Breast epithelium (tissue), 4 donors: ENCODE measurements at regions of chr22 and their contacts with region 1.

Region 1: DNA sequence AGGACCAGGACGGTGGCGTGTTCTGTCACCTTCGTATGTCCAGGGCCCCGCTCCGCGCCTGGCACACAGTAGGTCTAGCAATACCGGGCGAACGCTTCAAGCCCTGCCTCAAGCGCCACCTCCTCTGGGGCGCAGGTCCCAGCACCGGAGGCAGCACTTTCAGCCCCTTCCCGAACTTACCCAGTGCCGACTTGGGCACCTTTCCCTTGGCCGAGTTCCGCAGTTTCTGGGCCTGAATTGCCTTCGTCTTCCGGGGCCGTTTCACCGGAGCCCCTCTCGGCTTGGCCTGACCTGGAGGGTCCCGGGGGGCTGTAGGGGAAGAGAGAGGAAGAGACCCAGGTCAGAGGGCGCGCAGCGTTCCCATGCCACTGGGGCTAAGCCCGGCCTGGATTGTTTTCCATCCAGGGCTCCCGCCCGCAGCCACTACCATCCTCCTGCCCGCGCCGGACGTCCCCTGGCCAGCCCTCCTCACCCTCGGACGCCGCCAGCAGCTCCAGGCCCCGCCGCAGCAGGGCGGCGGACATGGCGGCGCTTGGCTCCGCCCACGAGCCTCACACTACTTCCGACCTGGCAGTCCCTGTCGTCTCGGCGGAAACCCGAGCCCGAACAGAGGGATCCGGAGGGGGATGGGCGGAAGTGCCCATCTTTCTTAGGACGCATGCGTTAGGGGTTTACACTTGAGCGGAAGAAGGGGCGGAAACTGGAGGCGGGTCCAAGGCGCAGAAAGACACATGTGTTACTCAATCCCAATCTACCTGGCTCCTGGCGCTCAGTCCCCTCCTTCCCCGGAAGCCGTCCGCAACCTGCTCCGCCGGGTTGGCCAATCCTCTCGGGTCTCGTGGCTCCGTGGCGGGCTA is at the start of gene RPS19BP1:
- DNase-seq: peak; percentile 99 to 100
- H3K4me3 ChIP-seq: peak within 1 kb of the TSS; percentile 83 to 90 (median 88)
- H3K27ac ChIP-seq: peak within 1 kb of the TSS; percentile 92 to 95
- H3K4me1 ChIP-seq: peaks cover 25 to 26% of the 10 kb centered on the region in 2 donors
- H3K27me3 ChIP-seq: no peaks in the 10 kb centered on the region
- CTCF ChIP-seq: no peak
- POLR2A ChIP-seq: peak; percentile 82
- total RNA-seq, gene RPS19BP1: 112 to 177 (median 159) TPM

Region 2: GRCh38 chr22:39144101-39144767 is 388.2 kb before region 1 on chr22:
- intact Hi-C with region 1: no loop called
- DNase-seq: peak in 1 of 2 donors; percentile 41
- H3K4me3 ChIP-seq: peak overlapping the region; percentile 90 to 96 (median 90)
- H3K27ac ChIP-seq: peak overlapping the region; percentile 97 to 98
- H3K4me1 ChIP-seq: peaks cover 10% of the 10 kb centered on the region in 2 donors
- H3K27me3 ChIP-seq: no peaks in the 10 kb centered on the region
- CTCF ChIP-seq: no peak
- POLR2A ChIP-seq: no peak

Region 3: DNA sequence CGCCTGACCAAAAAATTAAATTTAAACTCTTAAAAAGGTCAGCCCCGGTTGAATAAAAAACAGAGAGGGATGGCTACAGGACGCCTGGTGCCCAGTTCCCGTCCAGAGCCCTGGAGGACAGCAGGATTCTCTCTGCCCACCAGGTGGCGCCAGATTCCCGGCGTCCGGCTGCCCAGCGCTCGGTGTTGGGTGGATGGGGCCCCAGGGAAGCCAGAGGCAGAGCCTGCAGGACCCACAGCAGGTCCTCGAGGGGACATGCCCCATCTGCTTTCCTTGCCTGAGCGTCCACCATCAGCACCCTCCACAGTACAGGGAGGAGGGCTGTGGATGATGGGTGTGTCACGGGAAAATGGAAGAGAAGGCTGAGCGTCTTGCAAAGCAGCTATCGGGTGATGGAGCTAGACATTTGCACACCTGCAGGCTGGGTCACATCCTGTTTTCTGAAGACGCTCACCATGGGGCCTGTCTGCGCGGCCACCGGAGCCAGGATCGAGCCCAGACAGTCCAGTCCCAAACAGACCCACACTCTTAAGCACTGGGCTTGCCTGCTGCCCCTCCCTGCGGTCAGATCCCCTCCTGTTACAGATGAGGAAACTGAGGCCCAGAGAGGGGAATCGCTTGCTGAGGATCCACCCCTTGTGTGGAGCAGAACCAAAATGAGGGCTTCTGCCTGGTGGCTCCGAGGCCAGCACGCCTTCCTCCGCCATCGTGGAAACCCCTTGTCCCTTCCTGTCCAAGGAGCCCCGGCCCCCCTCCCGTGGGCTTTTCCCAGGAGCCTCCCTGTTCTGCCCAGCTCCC is 361.4 kb before region 1 on chr22:
- intact Hi-C with region 1: loop called (anchors 5 kb)
- DNase-seq: peak; percentile 64 to 84
- H3K4me3 ChIP-seq: peak overlapping the region in 1 of 3 donors; percentile 41
- H3K27ac ChIP-seq: no peak overlapping the region
- H3K4me1 ChIP-seq: peaks cover 21 to 25% of the 10 kb centered on the region in 2 donors
- H3K27me3 ChIP-seq: no peaks in the 10 kb centered on the region
- CTCF ChIP-seq: peak; percentile 96 to 98 (median 97)
- POLR2A ChIP-seq: no peak

Region 4: DNA sequence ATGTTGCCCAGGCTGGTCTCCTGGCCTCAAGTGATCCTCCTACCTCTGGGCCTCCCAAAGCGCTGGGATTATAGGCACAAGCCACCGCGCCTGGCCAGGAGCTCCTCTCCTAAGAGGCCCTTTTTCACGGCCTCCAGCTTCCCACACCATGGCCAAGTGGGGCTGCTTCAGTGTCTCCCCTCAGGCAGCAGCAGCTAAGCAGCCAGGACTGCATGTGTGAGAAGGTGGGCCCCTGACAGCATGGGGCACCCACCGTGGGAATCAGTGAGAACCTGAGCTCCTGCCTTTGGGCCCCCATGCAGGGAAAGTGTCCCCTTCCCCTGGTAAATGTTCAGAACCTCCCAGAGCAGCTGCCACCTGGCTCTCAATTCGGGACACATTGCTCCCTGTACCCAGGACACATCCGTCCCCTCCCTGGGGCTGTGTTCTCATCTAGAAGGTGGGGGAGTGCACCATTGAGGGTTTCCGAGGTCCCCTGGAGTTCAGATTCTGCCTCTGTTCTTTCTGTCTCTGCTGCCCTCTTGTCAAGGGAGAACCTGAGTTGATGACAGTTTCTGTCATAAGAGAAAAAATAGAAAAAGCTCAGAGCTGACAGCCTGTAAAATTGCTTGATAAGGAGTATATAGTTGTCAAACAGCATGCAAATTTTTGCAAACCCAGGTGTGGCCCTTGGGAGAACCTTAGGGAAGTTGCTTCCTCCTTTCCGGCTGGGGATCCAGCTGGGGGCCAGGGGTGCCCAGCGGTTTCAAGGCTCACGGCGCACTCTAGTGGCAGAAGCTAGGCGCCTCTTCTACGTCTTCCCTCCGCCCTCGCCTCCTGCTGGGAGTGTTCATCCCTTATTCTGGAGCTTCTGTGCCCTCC is 492.0 kb after region 1 on chr22:
- intact Hi-C with region 1: loop called (anchors 10 kb)
- DNase-seq: no peak
- H3K4me3 ChIP-seq: no peak overlapping the region
- H3K27ac ChIP-seq: no peak overlapping the region
- H3K4me1 ChIP-seq: peaks cover 0 to 14% of the 10 kb centered on the region in 2 donors
- H3K27me3 ChIP-seq: no peaks in the 10 kb centered on the region
- CTCF ChIP-seq: peak; percentile 19 to 76 (median 76)
- POLR2A ChIP-seq: no peak

Region 5: GRCh38 chr22:40352763-40353162 is 820.3 kb after region 1 on chr22:
- intact Hi-C with region 1: loop called (anchors 10 kb)
- DNase-seq: no peak
- H3K4me3 ChIP-seq: no peak overlapping the region
- H3K27ac ChIP-seq: no peak overlapping the region
- H3K4me1 ChIP-seq: peaks cover 0 to 2% of the 10 kb centered on the region in 2 donors
- H3K27me3 ChIP-seq: no peaks in the 10 kb centered on the region
- CTCF ChIP-seq: no peak
- POLR2A ChIP-seq: no peak